Heart left ventricle (tissue), 16 donors: ENCODE measurements at regions of chr15 and their contacts with region 1.

Region 1: DNA sequence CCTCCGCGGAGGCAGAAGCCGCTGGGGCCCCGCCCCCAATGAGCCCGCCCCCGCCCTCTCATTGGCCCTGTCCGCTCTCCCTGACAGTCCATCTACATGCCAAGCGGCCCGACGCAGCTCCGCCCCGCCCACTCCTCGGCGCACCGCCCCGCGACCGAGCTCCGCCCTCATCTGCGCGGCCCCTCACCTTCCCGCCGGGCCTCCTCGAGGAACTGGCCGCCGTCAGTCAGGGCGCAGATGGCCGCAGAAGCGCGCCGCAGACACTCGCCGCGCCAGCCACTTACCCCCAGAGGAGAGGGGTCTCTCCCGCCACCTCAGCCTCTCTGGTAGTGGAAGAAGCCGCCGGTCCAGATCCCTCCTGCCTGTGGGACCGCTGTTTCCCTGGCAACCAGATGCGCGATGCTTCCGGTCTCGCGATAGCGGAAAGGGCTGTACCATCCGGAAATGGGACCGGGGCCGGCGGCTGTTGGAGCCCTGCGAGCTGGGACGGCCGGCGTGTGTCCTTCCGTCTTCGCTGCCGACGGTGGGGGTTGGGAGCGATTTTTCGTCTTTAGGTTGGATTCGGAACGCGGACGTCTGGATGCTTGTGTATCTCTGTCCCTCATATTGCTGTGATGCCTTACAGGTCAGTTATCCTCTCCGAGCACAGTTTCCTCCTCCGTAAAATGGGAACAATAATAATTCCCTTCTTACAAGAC is at the start of gene FSIP1:
- DNase-seq: peak; percentile 96 to 98 (median 97)
- ATAC-seq: peak; percentile 98 to 100 (median 100)
- H3K4me3 ChIP-seq: peak within 1 kb of the TSS; percentile 61 to 88 (median 72)
- H3K27ac ChIP-seq: peak within 1 kb of the TSS in 11 of 12 donors; percentile 62 to 86 (median 73)
- H3K4me1 ChIP-seq: peaks cover 0 to 35% (median 17%) of the 10 kb centered on the region in 12 donors
- H3K27me3 ChIP-seq: no peaks in the 10 kb centered on the region
- CTCF ChIP-seq: no peak
- POLR2A ChIP-seq: no peak
- total RNA-seq, gene FSIP1: 0.28 to 3.7 (median 1.5) TPM in 8 of 9 donors, not detected in the other

Region 2: GRCh38 chr15:39594056-39594763 is 188.4 kb before region 1 on chr15:
- intact Hi-C with region 1: no loop called
- DNase-seq: no peak
- ATAC-seq: no peak
- H3K4me3 ChIP-seq: no peak overlapping the region
- H3K27ac ChIP-seq: no peak overlapping the region
- H3K4me1 ChIP-seq: peaks cover 0 to 12% (median 0%) of the 10 kb centered on the region in 12 donors
- H3K27me3 ChIP-seq: no peaks in the 10 kb centered on the region
- CTCF ChIP-seq: no peak
- POLR2A ChIP-seq: no peak

Region 3: GRCh38 chr15:39874890-39875549 is 92.4 kb after region 1 on chr15:
- intact Hi-C with region 1: loop called in 9 of 10 experiments (anchors 2 to 5 kb)
- DNase-seq: no peak
- ATAC-seq: no peak
- H3K4me3 ChIP-seq: no peak overlapping the region
- H3K27ac ChIP-seq: no peak overlapping the region
- H3K4me1 ChIP-seq: peaks cover 0 to 5% (median 0%) of the 10 kb centered on the region in 12 donors
- H3K27me3 ChIP-seq: no peaks in the 10 kb centered on the region
- CTCF ChIP-seq: peak; percentile 34 to 67 (median 52)
- POLR2A ChIP-seq: no peak

Region 4: GRCh38 chr15:39934397-39935071 is 151.9 kb after region 1 on chr15:
- intact Hi-C with region 1: loop called in 9 of 10 experiments (anchors 1 to 10 kb)
- DNase-seq: no peak
- ATAC-seq: peak in 1 of 4 donors; percentile 4
- H3K4me3 ChIP-seq: peak overlapping the region; percentile 39 to 93 (median 81)
- H3K27ac ChIP-seq: peak overlapping the region; percentile 64 to 97 (median 84)
- H3K4me1 ChIP-seq: peaks cover 0 to 51% (median 28%) of the 10 kb centered on the region in 12 donors
- H3K27me3 ChIP-seq: no peaks in the 10 kb centered on the region
- CTCF ChIP-seq: no peak
- POLR2A ChIP-seq: no peak

Region 5: DNA sequence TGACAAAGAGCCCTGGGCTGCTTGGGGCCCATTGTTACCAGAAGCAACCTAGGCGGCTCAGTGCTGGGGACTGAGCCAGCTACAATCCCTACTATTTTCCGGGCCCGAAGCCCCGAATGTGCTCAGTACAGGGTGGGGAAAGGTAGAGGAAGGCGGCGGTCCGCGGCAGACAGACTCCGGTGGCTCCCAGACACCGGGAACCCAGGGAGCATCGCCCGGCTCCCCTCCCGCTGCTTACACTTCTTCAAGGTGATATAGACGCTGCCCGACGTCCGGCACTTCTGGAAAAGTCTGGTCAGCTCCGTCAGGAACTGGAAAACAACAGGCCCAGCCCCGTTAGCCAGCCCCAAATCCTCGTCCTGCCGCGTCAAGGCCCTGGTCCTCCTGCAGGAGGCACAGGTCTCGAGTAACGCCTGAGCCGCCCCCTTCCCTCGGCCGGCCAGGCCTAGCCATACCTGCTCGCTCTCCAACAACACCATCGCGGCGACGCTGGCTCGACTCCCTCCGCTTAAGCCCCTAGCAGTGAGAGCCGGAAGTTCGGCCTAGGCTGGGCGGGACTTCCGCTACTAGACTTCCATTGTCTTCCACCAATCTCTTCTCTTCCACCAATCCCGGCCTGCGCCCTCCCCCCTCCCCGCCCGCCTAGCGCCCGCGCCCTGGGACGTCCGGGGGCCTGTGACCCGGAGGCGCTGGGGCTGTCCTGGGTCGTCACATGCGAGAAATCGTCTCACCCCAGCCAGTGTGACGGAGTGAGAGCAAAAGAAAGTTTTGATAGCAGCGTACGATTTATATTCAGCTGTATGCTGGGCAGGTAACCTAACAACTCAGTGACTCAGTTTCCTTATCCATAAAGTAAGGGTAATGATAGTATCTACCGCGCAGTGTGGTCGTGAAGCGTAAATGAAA is 256.3 kb after region 1 on chr15 and contains the start of gene SRP14:
- intact Hi-C with region 1: loop called in 2 of 10 experiments (anchors 5 to 10 kb)
- DNase-seq: peak; percentile 95 to 97 (median 97)
- ATAC-seq: peak; percentile 97 to 99 (median 98)
- H3K4me3 ChIP-seq: peak within 1 kb of the TSS; percentile 72 to 98 (median 84)
- H3K27ac ChIP-seq: peak within 1 kb of the TSS; percentile 88 to 98 (median 94)
- H3K4me1 ChIP-seq: peaks cover 4 to 43% (median 26%) of the 10 kb centered on the region in 12 donors
- H3K27me3 ChIP-seq: no peaks in the 10 kb centered on the region
- CTCF ChIP-seq: peak in 4 of 12 donors; percentile 13 to 27 (median 16)
- POLR2A ChIP-seq: peak in 1 of 2 donors; percentile 80
- total RNA-seq, gene SRP14: 189 to 446 (median 218) TPM

Region 6: DNA sequence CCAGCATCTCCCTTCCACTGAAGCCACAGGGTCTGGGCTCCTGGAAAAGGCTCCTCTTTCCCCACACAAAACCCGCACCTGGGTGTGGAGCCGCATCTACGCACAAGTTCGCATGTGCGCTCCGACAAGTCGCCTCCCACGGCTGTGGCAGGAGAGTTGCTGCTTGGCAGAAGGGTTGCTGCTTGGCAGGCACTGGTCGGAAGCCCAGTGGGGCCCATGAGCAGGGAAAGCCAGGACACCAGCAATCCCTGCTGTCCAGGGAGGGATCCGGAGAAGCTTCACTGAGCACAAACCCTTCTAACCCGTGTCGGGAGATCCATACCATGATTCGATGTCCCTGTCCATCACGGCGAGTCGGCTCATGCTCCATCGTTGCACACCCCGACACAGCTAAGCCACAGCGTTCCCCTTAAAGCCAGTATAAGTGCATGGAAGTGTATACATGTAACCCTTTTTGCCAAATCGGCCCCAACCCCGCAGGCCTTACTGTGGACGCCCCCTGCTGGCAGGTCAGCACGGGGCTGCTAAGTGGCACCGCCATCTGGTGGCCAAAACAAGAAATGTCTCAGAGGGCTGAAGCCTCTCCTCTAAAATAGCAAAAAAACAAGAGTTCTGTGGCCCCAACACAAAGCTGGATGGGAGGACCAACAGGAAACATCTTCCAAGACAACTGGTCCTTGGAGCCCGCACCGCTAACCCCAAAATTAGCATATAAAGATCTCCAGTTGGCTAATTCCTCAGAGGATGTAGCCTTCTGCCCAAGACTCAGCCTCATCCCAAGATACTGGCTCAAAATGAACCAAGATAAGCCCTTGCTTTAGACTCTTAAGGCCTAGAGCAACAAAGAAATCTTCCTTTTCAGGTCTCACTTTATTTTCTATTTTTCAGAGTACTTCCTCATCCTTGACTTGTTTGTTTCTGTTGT is 492.0 kb after region 1 on chr15:
- intact Hi-C with region 1: loop called in 2 of 10 experiments (anchors 10 kb)
- DNase-seq: peak; percentile 79 to 90 (median 82)
- ATAC-seq: peak; percentile 43 to 69 (median 55)
- H3K4me3 ChIP-seq: no peak overlapping the region
- H3K27ac ChIP-seq: no peak overlapping the region
- H3K4me1 ChIP-seq: peaks cover 0 to 31% (median 2%) of the 10 kb centered on the region in 12 donors
- H3K27me3 ChIP-seq: peaks cover 2 to 20% (median 8%) of the 10 kb centered on the region in 9 donors
- CTCF ChIP-seq: peak; percentile 99 to 100 (median 100)
- POLR2A ChIP-seq: no peak